Gastrocnemius medialis (tissue), 4 donors: ENCODE measurements at regions of chr3 and their contacts with region 1.

Region 1: DNA sequence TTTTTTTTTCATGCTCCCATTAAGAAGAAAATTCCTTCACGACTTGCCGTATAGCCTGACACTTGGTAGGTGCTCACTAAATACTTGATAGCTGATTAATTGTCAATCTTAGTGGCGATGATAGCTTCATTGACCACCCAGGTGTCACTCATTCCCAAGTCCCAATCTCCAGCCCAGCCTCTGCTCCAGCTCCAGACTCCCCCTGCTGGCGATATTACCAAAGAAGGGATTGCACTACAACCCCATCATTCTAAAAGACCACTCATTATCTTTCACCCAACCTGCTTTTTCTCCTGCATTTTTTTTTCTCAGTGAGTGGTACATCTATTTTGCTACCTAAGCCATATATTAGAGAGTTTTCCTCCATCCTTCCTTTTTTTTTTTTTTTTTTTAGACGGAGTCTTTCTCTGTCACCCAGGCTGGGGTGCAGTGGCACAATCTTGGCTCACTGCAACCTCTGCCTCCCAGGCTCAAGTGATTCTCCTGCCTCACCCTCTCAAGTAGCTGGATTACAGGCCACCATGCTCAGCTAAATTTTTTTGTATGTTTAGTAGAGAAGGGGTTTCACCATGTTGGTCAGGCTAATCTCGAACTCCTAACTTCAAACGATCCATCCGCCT is 19.5 kb upstream of the COMMD2 start:
- DNase-seq: peak in 1 of 2 donors; percentile 15
- ATAC-seq: no peak
- H3K4me3 ChIP-seq: no peak overlapping the region
- H3K27ac ChIP-seq: no peak overlapping the region
- H3K4me1 ChIP-seq: no peaks in the 10 kb centered on the region
- H3K27me3 ChIP-seq: no peaks in the 10 kb centered on the region
- CTCF ChIP-seq: peak; percentile 43 to 71 (median 50)
- POLR2A ChIP-seq: no peak

Region 2: DNA sequence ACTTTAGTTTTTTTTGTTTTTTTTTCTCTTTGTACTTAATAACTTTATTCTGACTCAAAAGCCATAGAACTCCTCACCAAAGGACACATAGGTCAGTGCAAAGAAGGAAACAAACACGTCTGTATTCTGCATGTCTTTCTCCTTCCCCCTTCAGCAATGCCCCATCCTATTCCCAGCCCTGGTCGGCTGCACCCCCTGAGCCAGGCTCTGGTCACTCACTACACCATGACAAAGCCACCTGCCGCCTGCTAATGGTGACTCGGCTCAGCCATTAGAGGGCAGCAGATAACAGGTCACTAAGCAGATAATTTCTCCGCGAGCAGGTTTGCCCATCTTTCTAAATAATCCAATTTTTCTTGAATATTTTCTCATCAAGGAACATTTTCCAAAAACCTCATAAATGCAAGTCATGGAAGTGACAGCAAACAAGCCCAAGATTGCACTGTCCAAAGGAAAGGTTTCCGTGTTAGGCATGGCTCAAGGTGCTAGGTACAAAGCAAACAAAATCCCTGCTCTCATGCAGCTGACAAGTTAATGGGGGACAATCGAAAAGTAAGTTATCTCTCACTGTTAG is 259.5 kb before region 1 on chr3:
- in situ Hi-C with region 1: no loop called
- intact Hi-C with region 1: loop called (anchors 10 kb)
- DNase-seq: peak; percentile 32 to 43
- ATAC-seq: peak; percentile 48 to 58
- H3K4me3 ChIP-seq: no peak overlapping the region
- H3K27ac ChIP-seq: no peak overlapping the region
- H3K4me1 ChIP-seq: peaks cover 5 to 8% of the 10 kb centered on the region in 2 donors
- H3K27me3 ChIP-seq: no peaks in the 10 kb centered on the region
- CTCF ChIP-seq: peak; percentile 64 to 90 (median 74)
- POLR2A ChIP-seq: no peak

Region 3: DNA sequence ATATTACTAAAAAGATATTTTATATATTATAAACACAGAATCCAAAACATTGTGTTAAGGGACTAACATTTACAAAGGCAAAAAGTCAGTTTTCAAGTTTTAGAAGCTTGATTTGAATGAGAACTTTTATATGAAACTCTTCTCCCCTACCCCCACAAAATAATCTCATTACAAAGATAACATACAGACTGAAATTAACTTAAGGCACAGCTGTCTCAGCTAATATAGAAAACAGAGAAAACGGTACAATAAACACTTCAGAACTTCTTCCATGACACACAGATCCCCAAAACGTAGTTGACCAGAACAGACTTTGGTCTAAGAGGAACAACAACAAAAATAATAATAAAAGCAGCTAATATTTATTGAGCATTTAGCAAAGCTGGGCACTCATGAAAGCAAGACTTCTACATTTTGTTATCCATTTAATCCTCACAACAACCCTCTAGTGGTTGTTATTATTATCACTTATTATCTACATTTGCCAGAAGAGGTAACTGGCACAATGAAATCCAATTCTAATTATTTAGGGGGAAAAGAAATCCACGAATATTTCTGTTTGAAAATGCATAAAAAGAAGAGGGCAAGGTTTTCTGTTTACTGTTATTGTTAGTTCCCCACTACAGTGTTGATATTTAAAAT is 130.9 kb after region 1 on chr3:
- in situ Hi-C with region 1: no loop called
- intact Hi-C with region 1: no loop called
- DNase-seq: no peak
- ATAC-seq: no peak
- H3K4me3 ChIP-seq: no peak overlapping the region
- H3K27ac ChIP-seq: peak overlapping the region in 2 of 4 donors; percentile 5 to 16
- H3K4me1 ChIP-seq: peaks cover 30 to 42% of the 10 kb centered on the region in 2 donors
- H3K27me3 ChIP-seq: no peaks in the 10 kb centered on the region
- CTCF ChIP-seq: peak in 2 of 5 experiments; percentile 5 to 40
- POLR2A ChIP-seq: no peak